PC-3 (cell line): ENCODE measurements at regions of chr3 and their contacts with region 1.

Region 1: DNA sequence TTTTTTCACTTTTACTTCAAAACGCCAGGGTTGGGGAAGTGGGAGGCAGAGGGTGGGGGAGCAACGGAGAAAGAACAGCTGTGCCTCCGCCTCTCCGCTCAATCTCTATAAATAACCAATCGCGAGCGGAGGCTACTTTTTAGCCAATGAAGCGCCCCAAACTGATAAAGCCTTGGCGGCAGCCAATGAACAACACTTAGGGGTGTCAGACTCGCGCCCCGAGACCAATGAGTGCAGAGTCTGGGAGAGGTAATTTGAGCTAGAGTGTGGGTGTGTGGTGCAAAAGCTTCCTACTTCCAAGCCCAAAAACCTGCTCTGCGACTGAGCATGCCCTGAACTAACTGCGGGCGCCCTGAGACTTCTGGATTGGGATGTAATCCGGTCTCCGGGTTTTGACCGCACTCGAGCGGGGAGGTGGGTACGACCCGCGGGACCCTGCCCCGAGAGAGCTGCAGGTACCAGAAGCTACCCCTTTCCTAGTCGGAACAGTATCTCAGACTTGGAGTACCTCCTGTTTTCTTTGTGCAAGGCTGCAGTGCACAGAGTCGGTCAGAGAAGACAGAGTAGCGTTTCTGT is 800 bp upstream of the RAP2B start:
- DNase-seq: peak; percentile 99
- ATAC-seq: peak; percentile 69
- H3K4me3 ChIP-seq: peak overlapping the region; percentile 95
- H3K27ac ChIP-seq: peak overlapping the region; percentile 94
- H3K4me1 ChIP-seq: peaks cover 31% of the 10 kb centered on the region
- H3K27me3 ChIP-seq: no peaks in the 10 kb centered on the region
- CTCF ChIP-seq: no peak

Region 2: GRCh38 chr3:153052096-153052460 is 109.1 kb before region 1 on chr3:
- CTCF ChIA-PET with region 1: interaction called, 6 read pairs
- POLR2A ChIA-PET with region 1: interaction called, 18 read pairs
- intact Hi-C with region 1: no loop called
- DNase-seq: peak; percentile 98
- ATAC-seq: peak; percentile 85
- H3K4me3 ChIP-seq: peak overlapping the region; percentile 56; the same call in 1 of the 2 replicates
- H3K27ac ChIP-seq: peak overlapping the region; percentile 96
- H3K4me1 ChIP-seq: peaks cover 25% of the 10 kb centered on the region
- H3K27me3 ChIP-seq: no peaks in the 10 kb centered on the region
- CTCF ChIP-seq: no peak

Region 3: DNA sequence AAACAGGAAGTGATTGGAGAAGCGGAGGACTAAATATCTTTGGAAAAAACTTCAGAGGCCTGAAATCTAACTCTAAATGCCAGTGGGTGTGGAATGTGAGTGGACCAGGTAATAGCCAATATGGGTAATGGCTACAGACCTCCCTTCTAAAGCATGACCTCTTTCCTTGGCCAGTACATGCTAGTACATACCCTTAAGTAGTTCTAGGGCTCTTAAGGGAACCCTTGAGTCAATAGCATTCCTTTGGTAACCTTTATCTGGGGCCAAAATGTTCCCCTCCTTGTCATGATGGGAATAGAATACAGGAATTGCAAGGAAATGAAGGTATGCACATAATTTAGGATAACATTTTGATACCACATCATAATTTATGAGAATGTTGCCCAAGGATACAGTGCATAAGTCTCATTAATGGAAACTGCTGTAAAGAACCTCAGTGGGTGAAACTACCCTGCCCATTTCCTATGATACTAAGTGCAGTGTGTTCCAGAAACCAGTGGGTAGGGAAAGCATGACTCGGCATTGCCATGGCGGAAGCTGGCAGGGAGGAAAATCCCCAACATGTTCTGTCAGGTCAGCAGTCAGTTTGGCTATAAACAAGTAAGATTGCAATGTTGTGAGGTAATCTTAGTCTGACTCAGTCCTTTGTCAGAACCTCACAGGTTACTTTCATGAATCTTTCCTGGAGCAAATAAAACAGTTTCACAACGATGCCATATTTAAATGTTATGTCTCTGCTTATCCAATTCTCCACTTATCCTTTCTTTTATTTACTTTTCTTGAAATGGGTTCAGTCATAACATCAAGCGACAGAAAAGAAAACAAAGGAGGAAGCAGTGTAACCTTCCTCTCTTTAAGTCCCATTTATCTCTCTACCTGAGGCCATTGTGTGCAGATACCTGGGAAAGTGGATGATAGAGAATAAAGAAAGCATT is 22.7 kb before region 1 on chr3:
- CTCF ChIA-PET with region 1: no interaction called
- POLR2A ChIA-PET with region 1: interaction called, 17 read pairs
- intact Hi-C with region 1: loop called (anchors 1 kb)
- DNase-seq: peak; percentile 98
- ATAC-seq: peak; percentile 70
- H3K4me3 ChIP-seq: no peak overlapping the region; the same call in 1 of the 2 replicates
- H3K27ac ChIP-seq: peak overlapping the region; percentile 98
- H3K4me1 ChIP-seq: peaks cover 57% of the 10 kb centered on the region
- H3K27me3 ChIP-seq: no peaks in the 10 kb centered on the region
- CTCF ChIP-seq: no peak

Region 4: GRCh38 chr3:153221748-153222162 is 60.5 kb after region 1 on chr3:
- CTCF ChIA-PET with region 1: no interaction called
- POLR2A ChIA-PET with region 1: interaction called, 7 read pairs
- intact Hi-C with region 1: loop called (anchors 2 kb)
- DNase-seq: peak; percentile 97
- ATAC-seq: peak; percentile 96
- H3K4me3 ChIP-seq: peak overlapping the region; percentile 13; the same call in 1 of the 2 replicates
- H3K27ac ChIP-seq: peak overlapping the region; percentile 89
- H3K4me1 ChIP-seq: peaks cover 24% of the 10 kb centered on the region
- H3K27me3 ChIP-seq: no peaks in the 10 kb centered on the region
- CTCF ChIP-seq: no peak

Region 5: DNA sequence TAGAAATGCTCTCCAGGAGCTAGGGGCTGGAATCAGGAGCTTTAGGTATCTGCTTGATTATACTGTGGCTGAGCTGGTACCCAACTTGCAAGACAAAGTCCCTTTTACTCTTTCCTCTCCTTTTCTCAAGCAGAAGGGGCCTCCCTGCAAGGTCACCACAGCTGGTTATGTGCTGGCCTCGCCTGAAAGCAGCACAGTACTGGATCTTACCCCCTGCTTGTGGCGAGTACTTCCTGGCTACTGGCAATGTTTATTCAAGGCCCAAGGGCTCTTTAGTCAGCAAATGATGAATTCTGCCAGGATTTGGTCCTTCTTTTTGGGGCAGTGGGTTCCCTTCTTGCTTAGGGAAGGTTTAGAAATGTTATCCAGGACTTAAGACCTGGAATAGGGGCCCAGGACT is 235.4 kb after region 1 on chr3:
- CTCF ChIA-PET with region 1: no interaction called
- POLR2A ChIA-PET with region 1: no interaction called
- intact Hi-C with region 1: no loop called
- DNase-seq: no peak
- ATAC-seq: no peak; the same call in 1 of the 2 replicates
- H3K4me3 ChIP-seq: no peak overlapping the region
- H3K27ac ChIP-seq: no peak overlapping the region
- H3K4me1 ChIP-seq: no peaks in the 10 kb centered on the region
- H3K27me3 ChIP-seq: no peaks in the 10 kb centered on the region
- CTCF ChIP-seq: no peak

Region 6: GRCh38 chr3:153443961-153444360 is 282.7 kb after region 1 on chr3:
- CTCF ChIA-PET with region 1: interaction called, 4 read pairs
- POLR2A ChIA-PET with region 1: no interaction called
- intact Hi-C with region 1: loop called (anchors 5 kb)
- DNase-seq: peak; percentile 65
- ATAC-seq: no peak
- H3K4me3 ChIP-seq: no peak overlapping the region
- H3K27ac ChIP-seq: no peak overlapping the region
- H3K4me1 ChIP-seq: no peaks in the 10 kb centered on the region
- H3K27me3 ChIP-seq: no peaks in the 10 kb centered on the region
- CTCF ChIP-seq: peak; percentile 72

Region 7: GRCh38 chr3:153903430-153903829 is 742.2 kb after region 1 on chr3:
- CTCF ChIA-PET with region 1: no interaction called
- POLR2A ChIA-PET with region 1: no interaction called
- intact Hi-C with region 1: loop called (anchors 10 kb)
- DNase-seq: no peak
- ATAC-seq: no peak
- H3K4me3 ChIP-seq: no peak overlapping the region
- H3K27ac ChIP-seq: no peak overlapping the region
- H3K4me1 ChIP-seq: peaks cover 27% of the 10 kb centered on the region
- H3K27me3 ChIP-seq: no peaks in the 10 kb centered on the region
- CTCF ChIP-seq: peak; percentile 31; the same call in 1 of the 2 replicates